HepG2 (cell line): ENCODE measurements at regions of chr15 and their contacts with region 1.

Region 1: DNA sequence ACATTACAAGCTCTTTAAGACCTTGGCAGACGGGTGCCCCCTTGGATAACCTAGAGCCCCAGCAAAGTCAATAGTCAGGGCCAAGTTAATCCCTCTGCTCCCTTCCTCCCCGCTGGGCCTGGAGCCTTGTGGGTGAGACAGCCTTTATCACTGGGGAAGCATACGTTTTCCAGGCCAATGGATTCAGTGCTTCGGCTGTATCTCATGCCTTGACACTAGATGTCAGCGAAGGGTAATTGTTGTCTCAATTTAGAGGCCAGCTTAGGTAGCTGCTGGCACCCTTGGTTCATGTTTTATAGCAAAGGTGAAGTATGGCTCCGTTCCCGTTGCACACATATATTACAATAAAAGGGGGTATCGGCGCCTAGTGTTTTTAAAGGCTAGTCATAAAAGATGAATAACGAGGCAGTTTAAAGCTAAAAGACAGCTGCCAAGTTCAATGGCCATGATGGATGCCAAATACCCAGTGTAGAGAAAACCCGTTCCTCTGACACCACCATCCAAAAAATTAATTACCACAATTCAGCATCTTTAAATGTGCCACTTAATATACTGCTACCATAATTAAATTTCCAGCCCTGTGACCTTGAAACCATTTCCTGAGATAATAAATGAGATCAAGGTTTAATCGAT is 52.3 kb upstream of the BNIP2 start:
- DNase-seq: peak; percentile 18
- ATAC-seq: peak; percentile 81
- H3K4me3 ChIP-seq: no peak overlapping the region
- H3K27ac ChIP-seq: no peak overlapping the region
- H3K4me1 ChIP-seq: peaks cover 28% of the 10 kb centered on the region
- H3K27me3 ChIP-seq: no peaks in the 10 kb centered on the region; a peak in 1 of 5 replicates
- CTCF ChIP-seq: peak; percentile 70
- EP300 ChIP-seq: no peak
- POLR2A ChIP-seq: no peak
- RAD21 ChIP-seq: no peak

Region 2: DNA sequence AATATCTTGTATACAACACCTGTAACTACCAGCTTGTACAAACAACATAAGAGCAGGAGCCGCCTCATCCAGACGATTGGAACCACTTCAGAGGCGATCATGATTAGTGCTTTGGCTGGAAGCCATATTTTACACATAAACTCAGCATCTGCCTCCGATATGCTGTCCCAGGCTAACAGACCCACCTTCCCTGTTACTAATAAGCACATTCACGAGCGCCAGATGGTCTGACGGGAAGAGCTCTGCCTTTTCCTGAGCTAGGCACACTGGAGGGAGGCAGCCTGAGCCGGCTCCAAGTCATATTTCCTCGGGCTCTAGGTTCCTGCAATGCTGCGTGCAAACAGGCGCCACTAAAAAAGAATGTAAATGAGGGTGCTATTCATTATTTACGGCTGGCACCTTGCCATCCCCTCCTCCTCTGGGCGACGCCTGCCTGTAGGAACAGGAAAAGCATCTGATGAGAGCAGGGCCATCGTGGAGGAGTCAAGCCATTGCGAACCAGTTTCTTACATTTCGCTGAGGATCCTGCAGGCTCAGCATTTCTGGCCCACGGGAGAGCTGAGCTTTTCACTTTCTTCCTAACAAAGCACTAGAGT is 558.2 kb after region 1 on chr15:
- CTCF ChIA-PET with region 1: no interaction called
- POLR2A ChIA-PET with region 1: no interaction called
- in situ Hi-C with region 1: loop called (anchors 25 kb)
- intact Hi-C with region 1: no loop called
- DNase-seq: no peak
- ATAC-seq: no peak
- H3K4me3 ChIP-seq: no peak overlapping the region
- H3K27ac ChIP-seq: no peak overlapping the region
- H3K4me1 ChIP-seq: no peaks in the 10 kb centered on the region
- H3K27me3 ChIP-seq: no peaks in the 10 kb centered on the region
- CTCF ChIP-seq: no peak
- EP300 ChIP-seq: no peak
- POLR2A ChIP-seq: no peak
- RAD21 ChIP-seq: no peak